ENCODE measurements at regions of chr1 and their contacts with region 1.

Region 1: DNA sequence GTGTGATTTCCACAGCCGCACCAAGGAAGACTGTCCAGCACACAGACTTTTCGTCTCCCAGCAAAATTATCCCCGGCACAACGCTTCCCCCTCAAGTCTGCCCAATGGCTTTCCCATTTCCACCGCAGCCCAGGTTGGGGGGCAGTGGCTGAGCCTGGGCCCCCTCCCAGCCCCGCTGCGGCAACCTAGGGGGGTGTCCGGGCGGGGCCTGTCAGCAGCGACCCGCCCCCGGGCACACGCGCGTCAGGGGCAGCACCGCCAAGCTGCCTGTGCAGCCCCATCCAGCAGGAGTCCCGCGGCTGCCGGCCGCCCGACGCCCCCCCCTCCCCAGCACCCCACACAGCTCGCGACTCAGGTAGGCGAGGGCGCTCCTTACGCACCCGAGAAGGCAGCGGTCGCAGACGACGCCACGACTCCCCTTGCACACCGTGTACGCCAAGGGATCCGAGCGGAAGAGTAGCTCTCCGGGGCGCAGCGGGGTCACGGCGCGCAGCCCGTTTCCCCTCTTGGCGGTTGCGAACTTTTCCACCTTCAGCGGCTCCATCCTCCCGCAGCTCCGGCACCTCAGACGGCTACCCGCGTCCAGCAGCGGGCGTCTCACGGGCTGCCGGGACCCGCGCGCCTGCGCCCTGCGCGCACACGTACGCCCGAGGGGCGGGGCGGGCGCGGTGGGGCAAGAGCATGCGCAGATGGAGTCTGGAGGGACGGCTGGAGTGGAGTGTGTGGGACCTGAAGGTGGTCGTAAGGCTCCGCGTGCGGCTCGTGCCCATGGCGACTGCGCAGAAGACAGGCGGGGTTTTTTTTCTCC is at the start of gene SMYD3:
- DNase-seq: peak; percentile 61
- H3K4me3 ChIP-seq: peak within 1 kb of the TSS; percentile 75 to 81
- H3K27ac ChIP-seq: peak within 1 kb of the TSS; percentile 23 to 24
- H3K4me1 ChIP-seq: no peaks in the 10 kb centered on the region
- H3K27me3 ChIP-seq: no peaks in the 10 kb centered on the region
- CTCF ChIP-seq: peak in 3 of 4 experiments; percentile 21 to 27 (median 23)
- POLR2A ChIP-seq: peak; percentile 77
- total RNA-seq, gene SMYD3: 19.8 to 23.9 TPM

Region 2: GRCh38 chr1:246699095-246699735 is 192.3 kb after region 1 on chr1:
- intact Hi-C with region 1: loop called (anchors 5 kb)
- DNase-seq: peak; percentile 84
- H3K4me3 ChIP-seq: peak overlapping the region in 1 of 2 donors; percentile 18
- H3K27ac ChIP-seq: peak overlapping the region in 1 of 2 donors; percentile 30
- H3K4me1 ChIP-seq: no peaks in the 10 kb centered on the region
- H3K27me3 ChIP-seq: no peaks in the 10 kb centered on the region
- CTCF ChIP-seq: peak; percentile 58 to 81 (median 78)
- POLR2A ChIP-seq: no peak

Region 3: GRCh38 chr1:246753670-246754535 is 247.0 kb after region 1 on chr1:
- intact Hi-C with region 1: loop called (anchors 5 kb)
- DNase-seq: peak; percentile 44
- H3K4me3 ChIP-seq: no peak overlapping the region
- H3K27ac ChIP-seq: peak overlapping the region in 1 of 2 donors; percentile 1
- H3K4me1 ChIP-seq: peaks cover 4% of the 10 kb centered on the region
- H3K27me3 ChIP-seq: no peaks in the 10 kb centered on the region
- CTCF ChIP-seq: peak; percentile 50 to 85 (median 74)
- POLR2A ChIP-seq: no peak